CD8-positive, alpha-beta T cell (primary cell): ENCODE measurements at regions of chr3 and their contacts with region 1.

Region 1: GRCh38 chr3:27147215-27147614 is 222.0 kb downstream of the NEK10 start:
- DNase-seq: no peak
- ATAC-seq: no peak
- H3K4me3 ChIP-seq: no peak overlapping the region
- H3K4me3 Mint-ChIP-seq: no peak overlapping the region
- H3K27ac ChIP-seq: no peak overlapping the region
- H3K27ac Mint-ChIP-seq: no peak overlapping the region
- H3K4me1 ChIP-seq: no peaks in the 10 kb centered on the region
- H3K4me1 Mint-ChIP-seq: no peaks in the 10 kb centered on the region
- H3K27me3 ChIP-seq: no peaks in the 10 kb centered on the region
- H3K27me3 Mint-ChIP-seq: peaks cover 6% of the 10 kb centered on the region
- CTCF ChIP-seq: no peak

Region 2: GRCh38 chr3:27134165-27134796 is 12.9 kb before region 1 on chr3:
- CTCF ChIA-PET with region 1: interaction called, 18 read pairs
- POLR2A ChIA-PET with region 1: interaction called, 3 read pairs
- intact Hi-C with region 1: no loop called
- DNase-seq: peak; percentile 5 to 77 (median 61)
- ATAC-seq: peak; percentile 78
- H3K4me3 ChIP-seq: no peak overlapping the region
- H3K4me3 Mint-ChIP-seq: no peak overlapping the region
- H3K27ac ChIP-seq: no peak overlapping the region
- H3K27ac Mint-ChIP-seq: no peak overlapping the region
- H3K4me1 ChIP-seq: no peaks in the 10 kb centered on the region
- H3K4me1 Mint-ChIP-seq: no peaks in the 10 kb centered on the region
- H3K27me3 ChIP-seq: no peaks in the 10 kb centered on the region
- H3K27me3 Mint-ChIP-seq: peaks cover 2% of the 10 kb centered on the region
- CTCF ChIP-seq: peak; percentile 91